ENCODE measurements at regions of chr4 and their contacts with region 1.

Region 1: GRCh38 chr4:106369456-106370060 is 980 bp upstream of the GIMD1 start:
- DNase-seq: peak; percentile 45 to 79 (median 53)
- ATAC-seq: peak; percentile 96
- H3K4me3 ChIP-seq: no peak overlapping the region
- H3K27ac ChIP-seq: no peak overlapping the region
- H3K4me1 ChIP-seq: no peaks in the 10 kb centered on the region
- H3K27me3 ChIP-seq: no peaks in the 10 kb centered on the region
- CTCF ChIP-seq: peak; percentile 63 to 71 (median 63)
- EP300 ChIP-seq: no peak
- POLR2A ChIP-seq: no peak
- RAD21 ChIP-seq: peak; percentile 56 to 64

Region 2: DNA sequence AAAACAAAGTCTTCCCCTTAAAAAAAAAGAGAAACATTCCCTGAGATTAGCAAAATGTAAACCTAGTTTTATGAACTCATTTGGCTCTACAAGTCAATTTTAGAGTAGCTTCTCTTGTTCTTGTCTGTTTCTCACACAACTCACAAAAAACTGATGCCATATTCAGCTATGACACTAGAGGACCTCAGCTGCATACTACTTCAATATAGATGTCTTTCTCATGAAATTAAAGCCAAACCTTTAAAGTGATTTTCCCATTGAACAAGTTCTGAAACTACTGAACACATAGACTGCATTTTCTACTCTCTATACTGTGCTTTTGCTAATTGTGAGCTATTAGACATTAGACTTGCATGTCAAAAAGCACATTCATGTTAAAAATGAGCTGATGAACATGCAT is 103.4 kb before region 1 on chr4:
- CTCF ChIA-PET with region 1: no interaction called
- POLR2A ChIA-PET with region 1: no interaction called
- in situ Hi-C with region 1: no loop called
- intact Hi-C with region 1: loop called (anchors 5 kb)
- DNase-seq: peak; percentile 10 to 44 (median 21)
- ATAC-seq: peak; percentile 82
- H3K4me3 ChIP-seq: no peak overlapping the region
- H3K27ac ChIP-seq: no peak overlapping the region
- H3K4me1 ChIP-seq: peaks cover 0 to 3% of the 10 kb centered on the region in 2 experiments; a peak in 1 of 5 replicates
- H3K27me3 ChIP-seq: no peaks in the 10 kb centered on the region
- CTCF ChIP-seq: peak; percentile 34 to 76 (median 52); a peak in 5 of 6 replicates
- EP300 ChIP-seq: no peak
- POLR2A ChIP-seq: no peak
- RAD21 ChIP-seq: peak; percentile 58 to 66

Region 3: GRCh38 chr4:106502106-106502699 is 132.6 kb after region 1 on chr4:
- CTCF ChIA-PET with region 1: interaction called, 10 read pairs
- POLR2A ChIA-PET with region 1: no interaction called
- in situ Hi-C with region 1: no loop called
- intact Hi-C with region 1: loop called (anchors 2 kb)
- DNase-seq: peak; percentile 24 to 64 (median 42)
- ATAC-seq: peak; percentile 95
- H3K4me3 ChIP-seq: no peak overlapping the region
- H3K27ac ChIP-seq: no peak overlapping the region
- H3K4me1 ChIP-seq: no peaks in the 10 kb centered on the region
- H3K27me3 ChIP-seq: no peaks in the 10 kb centered on the region
- CTCF ChIP-seq: peak; percentile 66 to 70 (median 68)
- EP300 ChIP-seq: no peak
- POLR2A ChIP-seq: no peak
- RAD21 ChIP-seq: peak; percentile 44 to 67; a peak in 3 of 4 replicates

Region 4: DNA sequence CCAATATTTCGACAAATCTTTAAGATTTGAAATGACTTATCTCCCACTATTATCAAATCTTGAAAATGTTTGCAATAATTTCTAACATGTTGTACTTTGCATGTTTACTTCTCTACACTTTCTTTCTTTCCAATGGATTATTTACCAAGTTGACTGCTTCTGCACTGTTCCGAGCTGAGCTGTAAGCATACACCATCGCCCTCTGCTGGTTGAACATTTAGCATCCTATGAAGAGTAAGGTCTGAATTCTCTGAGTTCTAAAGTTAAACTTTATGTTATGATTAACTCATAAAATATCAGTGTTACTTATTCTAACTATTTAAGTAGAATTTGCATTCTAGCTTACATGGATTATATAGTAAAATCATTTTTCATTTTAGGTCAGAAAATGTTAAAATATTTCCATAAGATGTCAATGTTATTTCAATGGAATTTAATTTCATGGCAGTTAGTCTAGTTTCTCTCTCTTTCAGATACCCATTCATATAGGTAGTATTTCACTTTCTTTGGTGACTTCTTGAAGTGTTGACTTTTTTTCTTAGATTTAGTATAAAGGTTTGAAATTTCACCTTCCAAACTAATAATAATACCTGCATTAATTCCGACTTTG is 529.2 kb after region 1 on chr4:
- CTCF ChIA-PET with region 1: interaction called, 3 read pairs
- POLR2A ChIA-PET with region 1: no interaction called
- in situ Hi-C with region 1: no loop called
- intact Hi-C with region 1: loop called (anchors 10 kb)
- DNase-seq: peak; percentile 27 to 50 (median 38)
- ATAC-seq: peak; percentile 74
- H3K4me3 ChIP-seq: no peak overlapping the region
- H3K27ac ChIP-seq: no peak overlapping the region
- H3K4me1 ChIP-seq: no peaks in the 10 kb centered on the region
- H3K27me3 ChIP-seq: no peaks in the 10 kb centered on the region
- CTCF ChIP-seq: peak; percentile 32 to 52 (median 47); a peak in 4 of 6 replicates
- EP300 ChIP-seq: no peak
- POLR2A ChIP-seq: no peak
- RAD21 ChIP-seq: peak; percentile 15 to 53; a peak in 3 of 4 replicates

Region 5: GRCh38 chr4:107183155-107183774 is 813.7 kb after region 1 on chr4:
- CTCF ChIA-PET with region 1: no interaction called
- POLR2A ChIA-PET with region 1: no interaction called
- in situ Hi-C with region 1: no loop called
- intact Hi-C with region 1: loop called (anchors 2 kb)
- DNase-seq: peak; percentile 27 to 51 (median 48)
- ATAC-seq: peak; percentile 93
- H3K4me3 ChIP-seq: no peak overlapping the region
- H3K27ac ChIP-seq: no peak overlapping the region
- H3K4me1 ChIP-seq: no peaks in the 10 kb centered on the region
- H3K27me3 ChIP-seq: no peaks in the 10 kb centered on the region
- CTCF ChIP-seq: peak; percentile 49 to 58 (median 54)
- EP300 ChIP-seq: no peak
- POLR2A ChIP-seq: no peak
- RAD21 ChIP-seq: peak; percentile 30 to 51; a peak in 3 of 4 replicates

Measured in K562 (cell line).